GM18951 (cell line): ENCODE measurements at regions of chr20 and their contacts with region 1.

Region 1: GRCh38 chr20:47677635-47678453 is 107.4 kb downstream of the SULF2 start:
- POLR2A ChIP-seq: no peak

Region 2: DNA sequence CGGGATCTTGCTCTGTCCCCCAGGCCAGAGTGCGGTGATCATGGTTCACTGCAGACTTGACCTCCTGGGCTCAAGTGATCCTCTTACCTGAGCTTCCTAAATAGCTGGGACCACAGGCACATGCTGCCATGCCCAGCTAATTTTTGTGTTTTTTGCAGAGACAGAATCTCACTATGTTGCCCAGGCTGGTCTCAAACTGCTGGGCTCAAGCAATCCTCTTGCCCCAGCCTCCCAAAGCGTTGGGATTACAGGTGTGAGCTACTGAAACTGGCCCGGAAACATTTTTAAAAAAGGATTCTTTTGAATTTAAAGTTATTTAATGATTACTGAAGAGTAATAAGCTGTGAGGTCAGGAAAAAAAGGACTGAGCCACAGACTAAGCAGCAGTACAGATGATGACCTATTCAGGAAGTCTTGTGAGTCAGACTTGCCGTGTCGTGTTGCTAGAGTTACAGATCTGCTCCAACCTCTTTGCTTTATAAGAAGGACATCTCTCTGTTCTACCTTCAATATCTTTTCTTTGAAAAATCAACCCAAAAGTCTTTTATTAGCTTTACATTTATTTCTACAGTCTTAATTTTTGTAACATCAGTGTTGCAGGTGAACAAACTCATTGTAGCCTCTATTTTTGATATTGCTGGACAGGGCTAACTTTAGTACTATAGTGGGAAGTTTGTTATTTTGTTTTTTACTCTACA is 67.4 kb before region 1 on chr20:
- in situ Hi-C with region 1: no loop called
- POLR2A ChIP-seq: no peak

Region 3: DNA sequence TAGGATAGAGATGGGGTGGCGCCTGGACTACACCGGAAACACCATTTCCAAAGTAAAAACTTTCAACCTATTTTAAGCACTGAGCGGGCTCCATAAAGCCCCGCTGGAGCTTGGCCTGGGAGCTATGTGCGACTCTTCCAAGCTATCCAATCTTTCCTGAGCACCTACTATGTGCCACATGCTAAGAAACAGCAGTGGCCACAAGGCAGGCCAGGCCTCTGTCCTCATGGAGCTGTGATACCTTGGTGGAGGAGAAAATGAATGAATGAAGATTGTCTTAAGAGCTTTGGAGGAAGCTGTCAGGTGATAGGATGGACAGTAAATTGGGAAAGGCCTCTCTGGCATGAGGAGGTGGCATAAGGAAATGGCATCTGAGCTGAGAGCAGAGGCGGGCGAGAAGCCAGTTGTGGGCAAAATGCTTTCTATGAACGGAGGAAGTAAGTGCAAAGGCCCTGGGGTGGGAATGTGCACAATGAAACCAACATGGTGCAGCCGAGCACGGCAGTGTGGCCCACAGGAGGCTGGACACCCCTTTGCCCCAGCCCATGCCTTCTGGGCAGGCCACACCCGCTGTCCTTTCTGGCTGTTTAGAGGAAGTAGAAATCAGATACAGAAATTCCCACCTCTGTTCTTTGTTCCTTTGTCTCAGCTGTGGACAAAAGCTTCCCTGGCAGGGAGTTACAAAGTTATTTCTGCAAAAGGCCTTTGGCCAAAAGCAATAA is 95.3 kb after region 1 on chr20:
- in situ Hi-C with region 1: no loop called
- POLR2A ChIP-seq: no peak

Region 4: DNA sequence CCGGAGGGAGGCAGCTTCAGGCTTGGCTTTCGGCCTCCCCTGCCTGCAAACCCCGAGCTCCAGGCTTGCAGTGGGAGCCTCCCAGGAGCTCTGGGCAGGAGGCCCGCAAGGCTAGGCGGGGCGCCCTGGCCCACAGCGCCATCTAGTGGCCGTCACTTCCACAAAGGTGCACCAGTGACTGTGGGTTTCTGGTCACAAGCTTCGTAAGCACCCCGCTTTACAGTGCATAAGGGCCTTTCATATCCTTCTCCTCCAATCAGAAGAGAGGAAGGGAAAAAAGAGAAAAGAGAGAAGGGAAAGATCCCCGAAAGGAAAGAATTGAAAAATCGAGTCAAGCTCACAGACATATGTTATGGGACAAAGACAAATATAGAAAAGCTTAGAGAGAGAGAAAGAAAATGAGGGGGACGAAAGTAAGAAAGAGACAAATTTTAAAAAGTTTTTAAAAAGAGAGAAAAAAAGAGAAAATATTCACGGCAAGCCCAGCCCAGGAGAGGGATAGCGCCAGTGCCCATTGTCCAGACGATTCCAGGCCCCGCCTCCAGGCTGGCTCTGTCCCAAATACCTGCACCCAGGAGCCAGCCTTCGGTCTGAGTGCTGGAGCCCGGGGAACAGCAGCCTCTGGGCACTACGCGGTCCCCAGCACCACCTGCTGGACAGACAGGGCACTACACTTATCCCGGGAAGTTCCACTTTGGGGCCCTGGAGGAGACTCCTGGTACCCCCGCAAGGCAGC is 942.8 kb after region 1 on chr20:
- in situ Hi-C with region 1: loop called (anchors 25 kb)
- POLR2A ChIP-seq: no peak